Heart left ventricle (tissue), 16 donors: ENCODE measurements at regions of chr6 and their contacts with region 1.

Region 1: GRCh38 chr6:114304304-114304887 is 38.4 kb downstream of the HS3ST5 start:
- DNase-seq: no peak
- ATAC-seq: no peak
- H3K4me3 ChIP-seq: no peak overlapping the region
- H3K27ac ChIP-seq: no peak overlapping the region
- H3K4me1 ChIP-seq: no peaks in the 10 kb centered on the region
- H3K27me3 ChIP-seq: no peaks in the 10 kb centered on the region
- CTCF ChIP-seq: peak; percentile 18 to 60 (median 46)
- POLR2A ChIP-seq: no peak

Region 2: DNA sequence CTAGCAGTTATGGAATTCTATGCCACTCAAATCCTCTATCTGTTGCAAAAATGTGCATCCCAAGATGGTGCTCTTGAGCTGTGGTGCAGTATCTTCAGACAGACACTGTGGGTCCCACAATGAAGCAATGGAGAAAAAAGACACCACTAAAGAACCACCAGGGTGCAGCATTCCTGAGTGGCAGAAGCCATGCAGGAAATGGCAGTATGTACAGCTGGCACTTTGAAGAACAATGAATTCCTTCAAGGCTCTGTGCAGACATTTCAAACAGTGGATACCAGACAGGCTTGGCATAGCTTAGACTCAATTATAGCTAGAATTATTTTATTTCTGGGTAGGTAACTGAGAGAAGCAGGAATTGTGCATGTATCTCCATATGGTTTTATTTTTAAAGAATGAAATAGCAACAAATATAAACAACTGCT is 309.5 kb before region 1 on chr6:
- intact Hi-C with region 1: loop called in 2 of 10 experiments (anchors 5 kb)
- DNase-seq: peak in 2 of 5 donors; percentile 26
- ATAC-seq: peak; percentile 53 to 84 (median 79)
- H3K4me3 ChIP-seq: no peak overlapping the region
- H3K27ac ChIP-seq: peak overlapping the region in 4 of 12 donors; percentile 1 to 22 (median 19)
- H3K4me1 ChIP-seq: peaks cover 0 to 32% (median 18%) of the 10 kb centered on the region in 12 donors
- H3K27me3 ChIP-seq: no peaks in the 10 kb centered on the region
- CTCF ChIP-seq: peak; percentile 24 to 61 (median 44)
- POLR2A ChIP-seq: no peak

Region 3: GRCh38 chr6:114096561-114097172 is 207.7 kb before region 1 on chr6:
- intact Hi-C with region 1: loop called in 4 of 10 experiments (anchors 10 kb)
- DNase-seq: no peak
- ATAC-seq: no peak
- H3K4me3 ChIP-seq: no peak overlapping the region
- H3K27ac ChIP-seq: no peak overlapping the region
- H3K4me1 ChIP-seq: no peaks in the 10 kb centered on the region
- H3K27me3 ChIP-seq: no peaks in the 10 kb centered on the region
- CTCF ChIP-seq: peak; percentile 59 to 85 (median 72)
- POLR2A ChIP-seq: no peak

Region 4: GRCh38 chr6:114194362-114195026 is 109.9 kb before region 1 on chr6:
- intact Hi-C with region 1: no loop called
- DNase-seq: peak in 3 of 5 donors; percentile 14 to 34 (median 21)
- ATAC-seq: peak in 2 of 4 donors; percentile 60 to 64
- H3K4me3 ChIP-seq: no peak overlapping the region
- H3K27ac ChIP-seq: peak overlapping the region in 1 of 12 donors; percentile 1
- H3K4me1 ChIP-seq: peaks cover 0 to 15% (median 0%) of the 10 kb centered on the region in 12 donors
- H3K27me3 ChIP-seq: no peaks in the 10 kb centered on the region
- CTCF ChIP-seq: no peak
- POLR2A ChIP-seq: no peak

Region 5: GRCh38 chr6:114650891-114651290 is 346.5 kb after region 1 on chr6:
- intact Hi-C with region 1: no loop called
- DNase-seq: no peak
- ATAC-seq: no peak
- H3K4me3 ChIP-seq: no peak overlapping the region
- H3K27ac ChIP-seq: no peak overlapping the region
- H3K4me1 ChIP-seq: no peaks in the 10 kb centered on the region
- H3K27me3 ChIP-seq: no peaks in the 10 kb centered on the region
- CTCF ChIP-seq: no peak
- POLR2A ChIP-seq: no peak